Panc1 (cell line): ENCODE measurements at regions of chr2 and their contacts with region 1.

Region 1: DNA sequence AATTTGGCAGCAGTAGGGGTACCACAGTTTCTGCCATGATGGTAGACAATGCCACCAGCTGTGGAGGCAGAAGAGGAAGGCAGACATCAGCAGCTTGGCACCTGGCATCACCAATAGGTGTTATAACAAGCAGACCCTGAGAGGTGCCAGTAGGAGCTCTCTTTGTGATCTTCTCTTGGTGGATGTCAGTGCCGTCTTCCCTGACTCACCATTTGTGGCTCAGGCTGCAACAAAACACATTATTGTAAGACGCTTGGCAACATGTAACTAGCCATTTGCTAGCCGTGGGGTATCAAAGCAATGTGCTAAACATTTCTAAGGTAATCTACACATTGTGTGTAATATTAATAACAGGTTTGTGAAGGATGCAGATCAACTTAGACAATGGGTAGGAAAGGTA is 11.3 kb upstream of the C2orf80 start:
- DNase-seq: no peak
- ATAC-seq: no peak
- H3K4me3 ChIP-seq: no peak overlapping the region
- H3K27ac ChIP-seq: no peak overlapping the region
- H3K4me1 ChIP-seq: no peaks in the 10 kb centered on the region
- H3K27me3 ChIP-seq: no peaks in the 10 kb centered on the region
- CTCF ChIP-seq: no peak

Region 2: GRCh38 chr2:208183972-208184705 is 17.0 kb before region 1 on chr2:
- CTCF ChIA-PET with region 1: no interaction called
- POLR2A ChIA-PET with region 1: no interaction called
- in situ Hi-C with region 1: no loop called
- intact Hi-C with region 1: loop called (anchors 2 kb)
- DNase-seq: no peak
- ATAC-seq: no peak
- H3K4me3 ChIP-seq: no peak overlapping the region
- H3K27ac ChIP-seq: no peak overlapping the region
- H3K4me1 ChIP-seq: no peaks in the 10 kb centered on the region; the same call in 1 of the 2 replicates
- H3K27me3 ChIP-seq: peaks cover 19% of the 10 kb centered on the region
- CTCF ChIP-seq: no peak

Region 3: DNA sequence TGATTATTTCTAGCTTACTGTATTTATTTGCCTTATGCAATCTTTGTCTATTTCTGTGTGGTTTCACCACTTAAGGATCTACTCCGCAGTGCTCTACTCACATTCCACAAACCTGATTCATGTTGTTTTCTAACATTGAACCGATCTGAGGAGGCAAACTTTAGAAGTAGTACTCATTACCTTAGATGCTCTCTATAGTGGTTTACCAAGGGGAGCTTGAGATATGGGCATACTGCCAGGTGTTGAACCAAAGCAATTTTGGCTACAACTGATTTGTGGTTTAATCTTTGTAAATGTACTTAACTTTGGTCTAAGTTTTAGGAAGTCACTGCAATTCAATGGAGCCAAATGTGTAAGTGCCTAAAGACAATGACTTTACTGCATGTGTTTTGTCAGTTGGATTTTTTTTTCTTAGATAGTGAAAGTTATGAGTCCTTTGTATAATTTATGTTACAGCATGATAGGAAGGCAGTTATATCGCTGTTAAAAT is 1272.8 kb after region 1 on chr2:
- CTCF ChIA-PET with region 1: no interaction called
- POLR2A ChIA-PET with region 1: no interaction called
- in situ Hi-C with region 1: no loop called
- intact Hi-C with region 1: no loop called
- DNase-seq: peak; percentile 57
- ATAC-seq: peak; percentile 91
- H3K4me3 ChIP-seq: no peak overlapping the region
- H3K27ac ChIP-seq: peak overlapping the region; percentile 25; the same call in 1 of the 2 replicates
- H3K4me1 ChIP-seq: peaks cover 28% of the 10 kb centered on the region
- H3K27me3 ChIP-seq: no peaks in the 10 kb centered on the region
- CTCF ChIP-seq: no peak